CD4-positive, alpha-beta T cell (primary cell): ENCODE measurements at regions of chr15 and their contacts with region 1.

Region 1: GRCh38 chr15:90931737-90932659 is at the start of gene HDDC3:
- DNase-seq: peak; percentile 82 to 94 (median 88)
- ATAC-seq: peak; percentile 63
- H3K4me3 ChIP-seq: peak within 1 kb of the TSS; percentile 95
- H3K4me3 Mint-ChIP-seq: peak within 1 kb of the TSS; percentile 98
- H3K27ac ChIP-seq: peak within 1 kb of the TSS; percentile 81 to 92
- H3K27ac Mint-ChIP-seq: peak within 1 kb of the TSS; percentile 96
- H3K4me1 ChIP-seq: peaks cover 76% of the 10 kb centered on the region
- H3K4me1 Mint-ChIP-seq: peaks cover 49% of the 10 kb centered on the region
- H3K27me3 ChIP-seq: no peaks in the 10 kb centered on the region
- H3K27me3 Mint-ChIP-seq: no peaks in the 10 kb centered on the region
- CTCF ChIP-seq: peak; percentile 94
- total RNA-seq, gene HDDC3: 9.9 to 10.8 TPM

Region 2: GRCh38 chr15:90233376-90234095 is 698.5 kb before region 1 on chr15 and contains the start of gene CIB1:
- CTCF ChIA-PET with region 1: interaction called, 4 read pairs
- POLR2A ChIA-PET with region 1: interaction called, 5 read pairs
- intact Hi-C with region 1: loop called in 1 of 2 experiments (anchors 2 kb)
- DNase-seq: peak; percentile 17 to 98 (median 96)
- ATAC-seq: peak; percentile 69
- H3K4me3 ChIP-seq: peak within 1 kb of the TSS; percentile 89
- H3K4me3 Mint-ChIP-seq: peak within 1 kb of the TSS; percentile 93
- H3K27ac ChIP-seq: peak within 1 kb of the TSS; percentile 97 to 99
- H3K27ac Mint-ChIP-seq: peak within 1 kb of the TSS; percentile 99
- H3K4me1 ChIP-seq: peaks cover 60% of the 10 kb centered on the region
- H3K4me1 Mint-ChIP-seq: peaks cover 56% of the 10 kb centered on the region
- H3K27me3 ChIP-seq: no peaks in the 10 kb centered on the region
- H3K27me3 Mint-ChIP-seq: no peaks in the 10 kb centered on the region
- CTCF ChIP-seq: peak; percentile 34
- total RNA-seq, gene CIB1: 279 to 295 TPM

Region 3: GRCh38 chr15:90648137-90649070 is 283.6 kb before region 1 on chr15:
- CTCF ChIA-PET with region 1: interaction called, 11 read pairs
- POLR2A ChIA-PET with region 1: interaction called, 5 read pairs
- intact Hi-C with region 1: no loop called
- DNase-seq: peak; percentile 17 to 83 (median 44)
- ATAC-seq: peak; percentile 83
- H3K4me3 ChIP-seq: no peak overlapping the region
- H3K4me3 Mint-ChIP-seq: peak overlapping the region; percentile 30
- H3K27ac ChIP-seq: no peak overlapping the region
- H3K27ac Mint-ChIP-seq: peak overlapping the region; percentile 16
- H3K4me1 ChIP-seq: peaks cover 27% of the 10 kb centered on the region
- H3K4me1 Mint-ChIP-seq: peaks cover 34% of the 10 kb centered on the region
- H3K27me3 ChIP-seq: peaks cover 0 to 2% of the 10 kb centered on the region in 2 experiments
- H3K27me3 Mint-ChIP-seq: no peaks in the 10 kb centered on the region
- CTCF ChIP-seq: peak; percentile 93

Region 4: DNA sequence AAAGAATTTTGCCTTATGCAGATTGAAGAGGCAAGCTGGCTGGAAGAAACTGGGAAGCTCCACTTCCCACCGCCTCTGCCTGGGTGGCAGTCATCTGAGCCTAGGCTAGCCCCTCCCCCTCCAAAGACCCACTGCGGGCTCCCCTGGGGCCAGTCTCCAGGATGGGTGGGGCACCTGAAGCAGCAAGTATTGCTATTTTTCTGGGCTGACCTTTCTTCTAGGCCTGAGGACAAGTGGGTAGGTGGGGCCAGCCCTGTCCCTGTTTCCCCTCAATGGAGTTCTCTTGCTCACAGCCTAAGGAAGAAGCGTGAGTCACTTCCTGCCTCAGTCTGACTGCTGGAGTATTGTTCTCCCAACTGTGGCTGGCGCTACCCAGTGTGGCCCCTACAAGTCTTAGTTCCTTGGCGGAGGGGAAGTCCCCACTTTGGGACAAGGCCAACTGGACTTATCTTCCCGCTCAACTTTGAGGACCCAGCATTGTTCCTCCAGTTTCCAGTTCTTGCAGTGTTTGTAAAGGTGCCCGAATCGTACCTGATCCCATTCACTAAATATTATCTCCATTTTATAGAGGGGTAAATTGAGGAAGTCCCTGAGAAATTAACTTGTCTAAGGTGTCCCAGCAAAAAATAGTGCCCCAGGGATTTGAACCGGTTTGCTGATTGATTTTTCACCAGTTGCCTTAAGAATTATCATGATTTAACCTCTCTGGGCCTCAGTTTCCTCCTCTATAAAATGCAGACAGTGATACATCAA is 62.2 kb before region 1 on chr15:
- CTCF ChIA-PET with region 1: interaction called, 8 read pairs
- POLR2A ChIA-PET with region 1: interaction called, 6 read pairs
- intact Hi-C with region 1: loop called in 1 of 2 experiments (anchors 5 kb)
- DNase-seq: peak in 6 of 14 experiments; percentile 17 to 74 (median 52)
- ATAC-seq: peak; percentile 32
- H3K4me3 ChIP-seq: no peak overlapping the region
- H3K4me3 Mint-ChIP-seq: peak overlapping the region; percentile 98
- H3K27ac ChIP-seq: peak overlapping the region in 1 of 2 donors; percentile 25
- H3K27ac Mint-ChIP-seq: peak overlapping the region; percentile 89
- H3K4me1 ChIP-seq: peaks cover 46% of the 10 kb centered on the region
- H3K4me1 Mint-ChIP-seq: peaks cover 41% of the 10 kb centered on the region
- H3K27me3 ChIP-seq: no peaks in the 10 kb centered on the region
- H3K27me3 Mint-ChIP-seq: no peaks in the 10 kb centered on the region
- CTCF ChIP-seq: no peak

Region 5: GRCh38 chr15:90921887-90922286 is 10.1 kb before region 1 on chr15:
- CTCF ChIA-PET with region 1: interaction called, 15 read pairs
- POLR2A ChIA-PET with region 1: interaction called, 6 read pairs
- intact Hi-C with region 1: no loop called
- DNase-seq: no peak
- ATAC-seq: no peak
- H3K4me3 ChIP-seq: no peak overlapping the region
- H3K4me3 Mint-ChIP-seq: no peak overlapping the region
- H3K27ac ChIP-seq: no peak overlapping the region
- H3K27ac Mint-ChIP-seq: no peak overlapping the region
- H3K4me1 ChIP-seq: no peaks in the 10 kb centered on the region
- H3K4me1 Mint-ChIP-seq: no peaks in the 10 kb centered on the region
- H3K27me3 ChIP-seq: no peaks in the 10 kb centered on the region
- H3K27me3 Mint-ChIP-seq: no peaks in the 10 kb centered on the region
- CTCF ChIP-seq: no peak

Region 6: GRCh38 chr15:90954712-90955671 is 23.0 kb after region 1 on chr15 and contains the start of gene RCCD1:
- CTCF ChIA-PET with region 1: interaction called, 41 read pairs
- POLR2A ChIA-PET with region 1: interaction called, 126 read pairs
- intact Hi-C with region 1: loop called in 1 of 2 experiments (anchors 1 kb)
- DNase-seq: peak; percentile 71 to 94 (median 80)
- ATAC-seq: peak; percentile 92
- H3K4me3 ChIP-seq: peak within 1 kb of the TSS; percentile 74
- H3K4me3 Mint-ChIP-seq: peak within 1 kb of the TSS; percentile 87
- H3K27ac ChIP-seq: peak within 1 kb of the TSS; percentile 87 to 92
- H3K27ac Mint-ChIP-seq: peak within 1 kb of the TSS; percentile 88
- H3K4me1 ChIP-seq: peaks cover 26% of the 10 kb centered on the region
- H3K4me1 Mint-ChIP-seq: peaks cover 9% of the 10 kb centered on the region
- H3K27me3 ChIP-seq: no peaks in the 10 kb centered on the region
- H3K27me3 Mint-ChIP-seq: no peaks in the 10 kb centered on the region
- CTCF ChIP-seq: no peak
- total RNA-seq, gene RCCD1: 4.5 to 4.8 TPM

Region 7: DNA sequence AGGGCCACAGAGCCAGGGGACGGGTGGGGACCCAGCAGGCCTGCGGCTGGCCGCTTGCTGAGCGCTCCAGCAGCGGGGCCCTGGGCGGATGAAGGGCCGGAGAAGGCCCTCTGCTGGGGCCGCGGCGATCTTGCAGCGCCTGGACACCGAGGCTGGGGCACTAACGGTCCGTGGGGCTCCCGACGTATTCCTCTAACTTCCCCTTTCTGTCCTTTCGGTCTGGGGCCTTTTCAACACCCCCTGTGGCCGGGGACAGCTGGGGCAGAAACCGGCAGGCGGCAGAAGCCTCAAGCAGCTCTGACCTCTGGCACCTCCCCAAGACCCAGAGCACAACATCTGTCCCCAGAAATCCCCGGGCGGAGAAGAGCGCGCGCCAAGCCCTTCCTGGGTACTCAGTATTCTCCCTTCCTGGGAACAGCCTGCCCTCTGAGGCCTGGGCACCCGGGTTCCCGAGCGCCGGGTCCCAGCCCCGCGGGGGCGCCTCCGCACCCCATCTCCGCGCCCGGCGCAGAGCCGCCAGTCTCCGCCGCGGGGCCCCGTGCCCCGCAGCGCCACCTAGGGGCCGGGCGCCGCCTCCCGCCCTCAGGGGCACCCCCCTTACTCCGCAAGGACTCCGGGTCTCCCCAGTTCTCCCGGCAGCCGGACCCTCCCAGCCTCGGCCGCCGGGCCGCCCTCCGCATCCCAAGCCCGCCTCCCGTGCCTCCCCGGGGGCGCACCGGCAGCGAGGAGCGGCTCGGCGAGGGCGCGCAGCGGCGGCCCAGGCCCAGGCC is 920.9 kb after region 1 on chr15:
- CTCF ChIA-PET with region 1: no interaction called
- POLR2A ChIA-PET with region 1: no interaction called
- intact Hi-C with region 1: loop called in 1 of 2 experiments (anchors 5 kb)
- DNase-seq: peak; percentile 45 to 90 (median 72)
- ATAC-seq: peak; percentile 52
- H3K4me3 ChIP-seq: peak overlapping the region; percentile 73
- H3K4me3 Mint-ChIP-seq: peak overlapping the region; percentile 94
- H3K27ac ChIP-seq: peak overlapping the region; percentile 73
- H3K27ac Mint-ChIP-seq: peak overlapping the region; percentile 92
- H3K4me1 ChIP-seq: peaks cover 68% of the 10 kb centered on the region
- H3K4me1 Mint-ChIP-seq: peaks cover 72% of the 10 kb centered on the region
- H3K27me3 ChIP-seq: no peaks in the 10 kb centered on the region
- H3K27me3 Mint-ChIP-seq: no peaks in the 10 kb centered on the region
- CTCF ChIP-seq: peak; percentile 53